AG04450 (cell line): ENCODE measurements at regions of chr16 and their contacts with region 1.

Region 1: GRCh38 chr16:67372664-67373063 is 20.6 kb downstream of the TPPP3 start:
- DNase-seq: no peak
- H3K4me3 ChIP-seq: no peak overlapping the region
- H3K27ac ChIP-seq: no peak overlapping the region
- H3K27me3 ChIP-seq: peaks cover 31% of the 10 kb centered on the region
- CTCF ChIP-seq: peak; percentile 58

Region 2: GRCh38 chr16:67393035-67393787 is 20.5 kb after region 1 on chr16 and contains the start of gene TPPP3:
- CTCF ChIA-PET with region 1: interaction called, 15 read pairs
- POLR2A ChIA-PET with region 1: no interaction called
- DNase-seq: no peak
- H3K4me3 ChIP-seq: peak within 1 kb of the TSS; percentile 54
- H3K27ac ChIP-seq: no peak within 1 kb of the TSS
- H3K27me3 ChIP-seq: peaks cover 7% of the 10 kb centered on the region
- CTCF ChIP-seq: peak; percentile 65
- polyA plus RNA-seq, gene TPPP3: 1.5 TPM in 2 replicates